Ovary (tissue), 10 donors: ENCODE measurements at regions of chr7 and their contacts with region 1.

Region 1: GRCh38 chr7:6338551-6339274 is 66.3 kb upstream of the CYTH3 start:
- DNase-seq: no peak
- H3K4me3 ChIP-seq: no peak overlapping the region
- H3K27ac ChIP-seq: no peak overlapping the region
- H3K4me1 ChIP-seq: no peaks in the 10 kb centered on the region
- H3K27me3 ChIP-seq: no peaks in the 10 kb centered on the region
- CTCF ChIP-seq: no peak
- EP300 ChIP-seq: no peak
- POLR2A ChIP-seq: no peak

Region 2: DNA sequence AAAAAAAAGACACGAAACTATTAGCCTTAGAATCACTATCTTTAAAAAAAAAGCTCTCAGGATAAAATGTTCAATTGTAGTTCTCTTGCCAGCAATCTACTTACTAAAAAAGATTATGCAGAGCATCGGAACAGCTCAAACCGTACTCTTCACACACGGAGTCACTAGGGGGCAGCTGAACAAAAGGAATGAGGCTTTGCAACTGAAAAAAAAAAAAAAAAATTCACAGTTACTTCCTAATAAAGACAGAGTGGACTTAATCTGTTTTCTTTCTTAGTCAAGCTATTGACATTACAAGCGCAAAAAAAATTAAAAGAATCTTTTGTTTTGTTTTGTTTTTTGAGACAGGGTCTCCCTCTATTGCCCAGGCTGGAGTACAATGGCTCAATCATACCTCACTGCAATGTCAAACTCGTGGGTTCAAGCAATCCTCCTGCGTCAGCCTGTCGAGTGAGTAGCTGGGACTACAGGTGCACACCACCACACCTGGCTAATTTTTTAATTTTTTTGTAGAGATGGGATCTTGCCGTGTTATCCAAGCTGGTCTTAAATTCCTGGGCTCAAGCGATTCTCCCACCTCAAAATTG is 341.4 kb before region 1 on chr7:
- intact Hi-C with region 1: loop called in 1 of 4 experiments (anchors 10 kb)
- DNase-seq: peak in 4 of 5 donors; percentile 42 to 64 (median 52)
- H3K4me3 ChIP-seq: no peak overlapping the region
- H3K27ac ChIP-seq: no peak overlapping the region
- H3K4me1 ChIP-seq: no peaks in the 10 kb centered on the region
- H3K27me3 ChIP-seq: no peaks in the 10 kb centered on the region
- CTCF ChIP-seq: peak; percentile 41 to 46 (median 42)
- EP300 ChIP-seq: no peak
- POLR2A ChIP-seq: no peak

Region 3: DNA sequence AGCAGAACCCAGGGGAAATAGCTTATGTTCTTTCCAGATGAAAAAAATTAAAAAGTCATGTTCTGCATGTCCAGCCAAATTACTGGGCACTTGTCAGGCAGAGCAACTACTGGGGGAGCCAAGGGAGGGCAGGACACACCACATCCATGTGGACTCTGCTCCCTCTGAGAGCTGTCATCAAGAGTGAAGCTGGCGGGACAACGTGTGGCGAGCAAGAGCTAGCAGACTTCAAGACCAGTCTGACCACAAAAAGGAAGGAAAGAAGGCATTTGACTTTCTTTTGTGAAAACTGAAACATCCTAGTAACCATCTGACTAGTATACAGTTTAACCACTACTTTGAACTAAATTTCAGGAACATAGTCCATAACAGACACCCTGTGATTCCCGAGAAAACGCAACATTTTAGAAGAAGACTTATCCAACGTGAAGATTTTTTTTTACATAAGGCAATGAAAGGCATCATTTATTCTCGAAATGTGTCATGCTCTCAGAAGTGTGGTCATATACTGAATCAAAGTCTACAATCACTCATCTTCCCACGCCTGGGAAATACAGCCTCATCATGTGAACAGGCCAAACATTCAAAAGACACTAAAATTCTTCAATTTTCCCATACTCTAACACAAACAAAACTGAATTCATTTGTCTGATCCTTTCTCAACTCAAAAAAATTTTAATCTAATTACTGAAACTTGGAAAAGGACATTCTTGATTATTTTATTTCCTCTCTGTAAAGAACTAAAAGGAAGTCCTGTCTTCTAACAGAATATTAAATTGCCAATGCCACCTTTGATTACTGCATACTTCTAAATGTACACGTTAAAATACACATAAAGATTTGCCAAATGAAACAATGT is 81.8 kb before region 1 on chr7:
- intact Hi-C with region 1: no loop called
- DNase-seq: no peak
- H3K4me3 ChIP-seq: no peak overlapping the region
- H3K27ac ChIP-seq: no peak overlapping the region
- H3K4me1 ChIP-seq: peaks cover 15% of the 10 kb centered on the region
- H3K27me3 ChIP-seq: no peaks in the 10 kb centered on the region
- CTCF ChIP-seq: no peak
- EP300 ChIP-seq: no peak
- POLR2A ChIP-seq: no peak